Right lobe of liver (tissue), 6 donors: ENCODE measurements at regions of chr22 and their contacts with region 1.

Region 1: GRCh38 chr22:19756288-19757128 is 4.1 kb upstream of the TBX1 start:
- DNase-seq: peak; percentile 75 to 78 (median 75)
- ATAC-seq: peak; percentile 80 to 89 (median 88)
- H3K4me3 ChIP-seq: peak overlapping the region; percentile 10 to 14 (median 12)
- H3K27ac ChIP-seq: no peak overlapping the region
- H3K4me1 ChIP-seq: peaks cover 0 to 4% (median 0%) of the 10 kb centered on the region in 4 donors
- H3K27me3 ChIP-seq: peaks cover 0 to 12% of the 10 kb centered on the region in 2 donors
- CTCF ChIP-seq: peak; percentile 57 to 70 (median 63)
- POLR2A ChIP-seq: no peak

Region 2: DNA sequence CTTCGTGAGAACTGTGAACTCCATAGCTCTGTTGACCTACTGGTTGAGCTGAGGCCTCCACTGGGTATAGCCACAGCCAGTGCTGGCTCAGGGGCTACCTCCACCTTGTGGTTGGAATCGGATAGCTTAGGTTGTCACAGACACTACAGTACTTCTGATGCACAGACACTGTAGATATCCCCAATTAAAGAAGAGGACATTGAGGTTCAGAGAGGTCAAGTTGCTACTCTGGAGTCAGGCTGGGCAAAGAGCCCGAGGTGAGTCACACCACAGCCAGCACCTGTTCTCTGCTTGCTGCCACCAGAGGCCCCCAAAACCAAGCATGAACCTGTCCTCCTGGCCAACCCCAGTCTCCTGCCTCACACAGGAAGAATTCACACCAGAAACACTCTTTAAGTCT is 282.9 kb before region 1 on chr22:
- intact Hi-C with region 1: no loop called
- DNase-seq: no peak
- ATAC-seq: peak in 1 of 4 donors; percentile 27
- H3K4me3 ChIP-seq: no peak overlapping the region
- H3K27ac ChIP-seq: no peak overlapping the region
- H3K4me1 ChIP-seq: peaks cover 0 to 13% (median 3%) of the 10 kb centered on the region in 4 donors
- H3K27me3 ChIP-seq: no peaks in the 10 kb centered on the region
- CTCF ChIP-seq: peak in 1 of 4 donors; percentile 6
- POLR2A ChIP-seq: no peak

Region 3: GRCh38 chr22:19705181-19705934 is 51.1 kb before region 1 on chr22:
- intact Hi-C with region 1: no loop called
- DNase-seq: no peak
- ATAC-seq: no peak
- H3K4me3 ChIP-seq: no peak overlapping the region
- H3K27ac ChIP-seq: no peak overlapping the region
- H3K4me1 ChIP-seq: no peaks in the 10 kb centered on the region
- H3K27me3 ChIP-seq: no peaks in the 10 kb centered on the region
- CTCF ChIP-seq: no peak
- POLR2A ChIP-seq: no peak

Region 4: GRCh38 chr22:19824197-19825015 is 67.9 kb after region 1 on chr22:
- intact Hi-C with region 1: no loop called
- DNase-seq: peak; percentile 72 to 87 (median 86)
- ATAC-seq: peak; percentile 79 to 87 (median 86)
- H3K4me3 ChIP-seq: no peak overlapping the region
- H3K27ac ChIP-seq: peak overlapping the region in 2 of 3 donors; percentile 42 to 51
- H3K4me1 ChIP-seq: peaks cover 0 to 36% (median 16%) of the 10 kb centered on the region in 4 donors
- H3K27me3 ChIP-seq: no peaks in the 10 kb centered on the region
- CTCF ChIP-seq: no peak
- POLR2A ChIP-seq: no peak

Region 5: GRCh38 chr22:19844377-19845053 is 88.0 kb after region 1 on chr22:
- intact Hi-C with region 1: loop called in 1 of 2 experiments (anchors 10 kb)
- DNase-seq: peak; percentile 58 to 75 (median 75)
- ATAC-seq: peak; percentile 59 to 67 (median 64)
- H3K4me3 ChIP-seq: no peak overlapping the region
- H3K27ac ChIP-seq: peak overlapping the region in 2 of 3 donors; percentile 23 to 49
- H3K4me1 ChIP-seq: peaks cover 0 to 11% (median 2%) of the 10 kb centered on the region in 4 donors
- H3K27me3 ChIP-seq: no peaks in the 10 kb centered on the region
- CTCF ChIP-seq: no peak
- POLR2A ChIP-seq: peak; percentile 18

Region 6: DNA sequence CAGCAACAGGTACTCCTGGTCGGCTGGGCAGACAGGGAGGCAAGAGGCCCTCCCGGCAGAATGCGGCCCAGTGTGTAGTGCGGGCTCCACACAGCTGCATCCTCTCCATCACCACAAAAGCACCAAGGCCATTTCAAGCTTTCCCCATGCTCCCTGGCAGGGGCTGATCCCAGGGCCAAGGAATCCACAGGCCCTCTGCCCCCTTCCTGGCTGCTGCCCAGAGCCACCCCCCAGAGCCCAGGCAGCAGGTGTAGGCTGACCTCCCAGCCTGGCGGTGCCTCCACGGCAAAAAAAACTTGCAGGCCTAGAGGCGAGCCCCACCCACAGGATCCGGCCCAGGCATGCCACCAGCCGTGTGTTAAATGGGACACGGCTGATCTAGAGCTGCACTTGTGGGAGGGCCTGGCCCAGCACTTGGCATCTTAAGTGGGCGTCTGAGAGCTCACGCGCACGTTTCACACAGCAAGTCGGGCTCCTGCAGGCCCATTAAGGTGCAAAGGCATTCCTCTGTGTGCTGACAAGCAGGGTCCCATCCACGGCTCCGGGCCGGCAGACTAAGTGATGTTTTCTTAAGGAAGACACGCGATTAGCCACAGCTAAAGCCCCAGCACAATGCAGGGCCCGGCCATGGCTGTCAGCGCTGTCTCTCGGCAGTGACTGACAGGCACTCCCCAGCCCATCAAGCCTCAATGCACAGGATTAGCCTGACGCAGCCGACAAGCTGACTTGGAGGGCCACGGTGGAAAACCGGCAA is 118.0 kb after region 1 on chr22:
- intact Hi-C with region 1: loop called in 1 of 2 experiments (anchors 10 kb)
- DNase-seq: peak in 1 of 3 donors; percentile 15
- ATAC-seq: no peak
- H3K4me3 ChIP-seq: no peak overlapping the region
- H3K27ac ChIP-seq: no peak overlapping the region
- H3K4me1 ChIP-seq: no peaks in the 10 kb centered on the region
- H3K27me3 ChIP-seq: no peaks in the 10 kb centered on the region
- CTCF ChIP-seq: no peak
- POLR2A ChIP-seq: no peak